Activated CD4-positive, alpha-beta T cell treated with anti-CD3 and anti-CD28 coated beads, Interleukin-2, amount 10 ng/mL, durations not matched to agents 24 days and 14 days (primary cell): ENCODE measurements at regions of chr14 and their contacts with region 1.

Region 1: GRCh38 chr14:34629657-34630529 is at the start of gene SNX6:
- DNase-seq: peak; percentile 94
- H3K4me3 Mint-ChIP-seq: peak within 1 kb of the TSS; percentile 91
- H3K27ac Mint-ChIP-seq: peak within 1 kb of the TSS; percentile 91
- H3K4me1 Mint-ChIP-seq: peaks cover 25% of the 10 kb centered on the region
- H3K27me3 Mint-ChIP-seq: peaks cover 13% of the 10 kb centered on the region
- total RNA-seq, gene SNX6: 68.6 and 70.4 TPM in 2 replicates

Region 2: DNA sequence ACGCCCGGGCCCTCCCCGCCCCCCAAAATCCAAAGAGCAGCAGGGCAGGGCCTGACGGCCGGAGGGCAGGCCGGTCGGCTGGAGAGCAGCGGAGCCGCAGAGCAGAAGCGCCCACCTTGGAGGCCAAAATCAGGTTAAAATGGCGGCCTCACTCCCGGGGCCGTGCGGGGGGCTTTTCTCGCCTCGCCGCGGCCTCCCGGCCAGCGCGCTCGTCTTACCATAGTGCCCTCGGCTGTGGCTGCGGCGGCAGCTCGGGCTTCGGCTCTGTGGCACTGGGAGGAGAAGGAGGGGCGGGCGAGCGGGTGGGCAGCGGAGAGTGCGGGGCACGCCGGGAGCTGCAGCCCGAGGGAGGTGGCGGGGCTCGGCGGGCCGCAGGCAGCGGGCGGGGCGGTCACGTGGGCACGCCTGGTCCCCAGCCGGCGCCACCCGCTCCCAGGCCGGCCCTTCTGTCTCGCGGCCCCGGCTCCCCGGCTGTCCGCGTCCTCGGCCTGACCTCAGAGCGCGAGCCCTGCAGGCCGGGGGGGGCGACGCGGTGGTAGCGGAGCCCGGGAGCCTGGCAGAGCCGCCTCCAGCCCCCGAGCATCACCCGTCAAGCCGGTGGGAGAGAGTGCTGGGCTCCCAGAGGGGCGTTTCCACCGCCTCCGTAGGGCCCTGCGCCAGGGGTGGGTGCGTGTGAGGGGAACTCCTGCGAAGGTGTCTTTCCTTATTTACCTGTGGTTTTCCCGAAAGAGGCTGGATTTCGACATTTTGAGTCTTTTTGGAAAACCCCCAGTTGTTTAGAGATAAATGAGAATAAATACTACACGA is 84.6 kb after region 1 on chr14 and contains the start of gene CFL2:
- intact Hi-C with region 1: loop called (anchors 1 kb)
- DNase-seq: peak; percentile 88
- H3K4me3 Mint-ChIP-seq: peak within 1 kb of the TSS; percentile 87
- H3K27ac Mint-ChIP-seq: peak within 1 kb of the TSS; percentile 86
- H3K4me1 Mint-ChIP-seq: peaks cover 21% of the 10 kb centered on the region
- H3K27me3 Mint-ChIP-seq: peaks cover 10% of the 10 kb centered on the region
- total RNA-seq, gene CFL2: 4.9 and 6.0 TPM in 2 replicates